HepG2 (cell line): ENCODE measurements at regions of chr10 and their contacts with region 1.

Region 1: GRCh38 chr10:20254078-20254477 is 437.8 kb downstream of the PLXDC2 start:
- DNase-seq: no peak
- ATAC-seq: no peak
- H3K4me3 ChIP-seq: no peak overlapping the region
- H3K27ac ChIP-seq: no peak overlapping the region
- H3K4me1 ChIP-seq: no peaks in the 10 kb centered on the region
- H3K27me3 ChIP-seq: no peaks in the 10 kb centered on the region
- CTCF ChIP-seq: no peak
- EP300 ChIP-seq: no peak
- POLR2A ChIP-seq: no peak
- RAD21 ChIP-seq: no peak

Region 2: DNA sequence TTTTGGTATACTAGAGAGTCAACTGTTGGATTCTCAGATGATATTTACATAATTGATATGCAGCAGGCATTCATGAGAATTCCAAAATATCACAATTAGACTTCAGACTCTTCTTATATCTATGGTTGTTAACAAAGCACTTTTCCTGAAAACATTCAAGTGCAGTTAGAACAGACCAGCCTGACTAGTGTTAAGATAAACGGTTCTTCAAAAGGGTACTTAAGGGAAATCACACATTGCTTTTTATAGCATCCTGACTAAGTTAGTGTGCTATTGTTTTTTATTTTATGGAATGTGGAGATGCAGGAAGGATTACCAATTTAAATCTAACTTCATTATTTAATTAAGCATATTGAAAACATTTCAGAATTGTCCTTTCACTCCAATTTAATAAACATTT is 32.7 kb before region 1 on chr10:
- CTCF ChIA-PET with region 1: no interaction called
- POLR2A ChIA-PET with region 1: no interaction called
- in situ Hi-C with region 1: no loop called
- intact Hi-C with region 1: loop called (anchors 1 kb)
- DNase-seq: no peak
- ATAC-seq: no peak
- H3K4me3 ChIP-seq: no peak overlapping the region
- H3K27ac ChIP-seq: no peak overlapping the region
- H3K4me1 ChIP-seq: no peaks in the 10 kb centered on the region
- H3K27me3 ChIP-seq: no peaks in the 10 kb centered on the region
- CTCF ChIP-seq: no peak
- EP300 ChIP-seq: no peak
- POLR2A ChIP-seq: no peak
- RAD21 ChIP-seq: no peak

Region 3: DNA sequence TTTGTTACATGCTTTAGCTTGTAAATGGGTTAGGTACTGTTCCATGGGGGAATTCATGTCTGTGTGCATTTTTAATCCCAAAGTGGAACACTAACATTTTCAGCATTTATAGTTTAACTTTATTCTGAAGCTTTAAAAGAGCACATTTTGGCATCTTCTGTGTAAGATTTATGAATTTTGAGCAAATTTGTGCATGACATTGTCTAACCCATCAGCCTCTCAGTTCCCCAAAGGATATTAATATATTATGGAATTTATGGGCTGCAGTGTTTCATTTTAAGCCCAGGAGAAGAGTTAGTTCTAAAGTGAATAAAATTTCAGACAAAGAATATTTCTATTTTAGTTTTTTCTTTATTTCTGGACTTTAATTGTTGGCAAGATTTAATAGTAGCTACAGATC is 16.5 kb before region 1 on chr10:
- CTCF ChIA-PET with region 1: no interaction called
- POLR2A ChIA-PET with region 1: no interaction called
- in situ Hi-C with region 1: no loop called
- intact Hi-C with region 1: no loop called
- DNase-seq: no peak
- ATAC-seq: no peak
- H3K4me3 ChIP-seq: no peak overlapping the region
- H3K27ac ChIP-seq: no peak overlapping the region
- H3K4me1 ChIP-seq: no peaks in the 10 kb centered on the region
- H3K27me3 ChIP-seq: no peaks in the 10 kb centered on the region
- CTCF ChIP-seq: no peak
- EP300 ChIP-seq: no peak
- POLR2A ChIP-seq: no peak
- RAD21 ChIP-seq: no peak

Region 4: GRCh38 chr10:20956843-20957242 is 702.8 kb after region 1 on chr10:
- CTCF ChIA-PET with region 1: no interaction called
- POLR2A ChIA-PET with region 1: no interaction called
- in situ Hi-C with region 1: no loop called
- intact Hi-C with region 1: no loop called
- DNase-seq: no peak
- ATAC-seq: no peak
- H3K4me3 ChIP-seq: no peak overlapping the region
- H3K27ac ChIP-seq: no peak overlapping the region
- H3K4me1 ChIP-seq: no peaks in the 10 kb centered on the region
- H3K27me3 ChIP-seq: 0 out of 5 replicates have a peak, but pooled peaks cover 0 to under 1% of the 10 kb centered on the region in 2 experiments
- CTCF ChIP-seq: no peak
- EP300 ChIP-seq: no peak
- POLR2A ChIP-seq: no peak
- RAD21 ChIP-seq: no peak